ENCODE measurements at regions of chr19 and their contacts with region 1.

Region 1: GRCh38 chr19:15466851-15467733 is 2.7 kb upstream of the RASAL3 start:
- DNase-seq: peak; percentile 68
- H3K4me3 Mint-ChIP-seq: peak overlapping the region; percentile 65
- H3K27ac Mint-ChIP-seq: peak overlapping the region; percentile 97
- H3K4me1 Mint-ChIP-seq: peaks cover 68% of the 10 kb centered on the region
- H3K27me3 Mint-ChIP-seq: peaks cover 3% of the 10 kb centered on the region

Region 2: GRCh38 chr19:15125232-15126067 is 341.6 kb before region 1 on chr19:
- intact Hi-C with region 1: loop called (anchors 5 kb)
- DNase-seq: peak; percentile 97
- H3K4me3 Mint-ChIP-seq: peak overlapping the region; percentile 91
- H3K27ac Mint-ChIP-seq: peak overlapping the region; percentile 98
- H3K4me1 Mint-ChIP-seq: peaks cover 37% of the 10 kb centered on the region
- H3K27me3 Mint-ChIP-seq: no peaks in the 10 kb centered on the region

Region 3: GRCh38 chr19:15379083-15379995 is 87.8 kb before region 1 on chr19 and contains the start of gene AKAP8:
- intact Hi-C with region 1: loop called (anchors 1 kb)
- DNase-seq: peak; percentile 98
- H3K4me3 Mint-ChIP-seq: peak within 1 kb of the TSS; percentile 98
- H3K27ac Mint-ChIP-seq: peak within 1 kb of the TSS; percentile 100
- H3K4me1 Mint-ChIP-seq: peaks cover 35% of the 10 kb centered on the region
- H3K27me3 Mint-ChIP-seq: no peaks in the 10 kb centered on the region
- total RNA-seq, gene AKAP8: 52.7 and 57.5 TPM in 2 replicates

Region 4: GRCh38 chr19:15432629-15433518 is 34.2 kb before region 1 on chr19:
- intact Hi-C with region 1: loop called (anchors 1 kb)
- DNase-seq: peak; percentile 94
- H3K4me3 Mint-ChIP-seq: peak overlapping the region; percentile 91
- H3K27ac Mint-ChIP-seq: peak overlapping the region; percentile 88
- H3K4me1 Mint-ChIP-seq: peaks cover 31% of the 10 kb centered on the region
- H3K27me3 Mint-ChIP-seq: no peaks in the 10 kb centered on the region

Region 5: DNA sequence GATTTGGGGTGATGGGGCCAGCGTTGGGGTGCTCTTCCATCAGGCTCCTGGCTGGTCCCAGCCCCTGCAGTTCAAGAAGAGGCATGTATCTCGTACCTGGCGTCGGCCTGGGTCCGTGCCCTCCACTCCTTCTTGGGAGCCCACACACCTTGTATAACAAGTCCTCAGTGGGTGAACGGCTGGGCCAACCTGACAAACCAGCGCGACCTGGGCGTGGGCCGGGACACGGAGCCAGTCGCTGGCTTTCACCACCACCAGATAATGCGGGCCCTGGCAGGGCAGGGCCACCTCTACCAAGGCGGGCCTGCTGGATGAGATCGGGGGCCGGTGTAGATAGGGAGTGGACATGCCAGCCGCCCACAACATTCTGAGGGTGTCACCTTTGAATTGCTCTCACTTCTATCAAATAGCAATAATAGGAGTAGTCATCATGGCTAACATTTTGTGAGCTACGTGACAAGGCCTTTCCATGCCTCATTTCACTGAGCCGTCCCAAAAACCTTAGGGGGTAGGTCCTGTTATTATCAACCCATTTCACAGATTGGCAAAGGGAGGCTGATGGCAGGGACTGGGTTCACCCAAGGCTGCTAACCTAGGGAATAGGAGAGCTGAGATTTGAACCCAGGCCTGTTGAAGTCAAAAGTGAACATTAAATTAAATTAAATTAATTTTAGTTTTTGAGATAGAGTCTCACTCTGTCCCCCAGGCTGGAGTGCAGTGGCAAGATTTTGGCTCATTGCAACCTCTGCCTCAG is 44.8 kb after region 1 on chr19:
- intact Hi-C with region 1: loop called (anchors 2 kb)
- DNase-seq: no peak
- H3K4me3 Mint-ChIP-seq: no peak overlapping the region
- H3K27ac Mint-ChIP-seq: no peak overlapping the region
- H3K4me1 Mint-ChIP-seq: peaks cover 24% of the 10 kb centered on the region
- H3K27me3 Mint-ChIP-seq: peaks cover 28% of the 10 kb centered on the region

Region 6: DNA sequence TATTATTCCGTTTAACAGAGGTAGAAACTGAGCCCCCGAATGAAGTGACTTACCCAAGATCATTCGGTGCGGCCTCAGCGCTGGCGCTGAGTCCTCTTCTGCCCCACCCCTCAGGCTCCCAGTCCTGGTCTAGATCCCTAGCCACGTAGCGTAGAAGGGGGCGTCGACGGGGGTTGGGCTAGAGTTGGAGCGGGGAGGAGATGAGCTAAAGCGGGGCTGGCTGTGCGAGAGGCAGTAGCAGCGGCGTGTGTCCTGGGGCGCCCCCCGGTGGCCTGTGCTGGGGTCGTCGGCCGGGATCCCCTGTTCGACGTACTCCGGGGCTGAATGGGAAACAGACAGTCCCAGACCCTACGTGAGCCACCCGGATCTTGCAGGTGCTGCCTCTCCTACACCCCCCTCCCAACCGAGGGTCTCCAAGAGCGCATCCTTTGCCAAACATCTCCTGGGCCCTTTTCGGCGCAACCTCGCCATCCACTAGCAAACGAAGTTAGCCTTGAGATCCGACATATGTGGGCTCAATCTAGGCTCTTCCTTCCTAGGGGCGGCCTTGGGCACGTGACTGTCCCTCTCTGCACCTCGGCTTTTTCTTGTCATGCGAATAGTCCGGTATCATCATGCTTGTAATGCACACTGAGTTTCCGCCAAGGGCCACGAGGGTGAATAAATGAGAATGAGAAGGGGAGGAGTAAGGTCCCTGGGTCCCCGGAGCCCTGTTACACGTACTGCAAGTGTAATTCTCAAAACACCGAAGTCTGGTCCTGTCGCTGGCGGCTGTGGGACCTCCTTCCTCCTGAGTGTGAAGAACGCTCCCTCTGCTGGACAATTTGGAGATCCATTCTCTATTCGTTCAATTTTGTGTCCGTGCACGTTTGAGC is 88.9 kb after region 1 on chr19:
- intact Hi-C with region 1: loop called (anchors 1 kb)
- DNase-seq: peak; percentile 92
- H3K4me3 Mint-ChIP-seq: peak overlapping the region; percentile 82
- H3K27ac Mint-ChIP-seq: peak overlapping the region; percentile 83
- H3K4me1 Mint-ChIP-seq: peaks cover 25% of the 10 kb centered on the region
- H3K27me3 Mint-ChIP-seq: peaks cover 9% of the 10 kb centered on the region

Region 7: DNA sequence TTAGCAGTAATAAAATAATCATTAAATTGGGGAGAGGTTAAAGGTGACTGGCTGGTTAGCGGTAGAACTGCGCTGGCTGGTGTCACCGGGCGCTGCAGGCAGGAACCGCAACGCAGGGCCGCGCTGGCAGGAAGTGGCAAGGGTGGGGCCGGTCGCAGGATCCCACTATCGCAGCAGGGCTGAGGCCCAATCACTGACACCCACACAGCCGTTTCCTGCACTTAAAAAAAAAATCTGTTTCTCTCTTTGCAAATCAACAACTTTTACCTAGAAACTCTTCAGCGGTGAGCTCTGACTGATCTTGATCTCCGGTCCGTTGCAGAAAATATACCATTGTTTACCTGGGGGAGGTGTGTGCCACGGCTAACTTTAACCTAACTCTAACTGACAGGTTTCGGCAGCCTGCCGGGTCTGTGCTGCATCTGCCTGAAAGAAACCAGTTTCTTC is 904.5 kb after region 1 on chr19:
- intact Hi-C with region 1: loop called (anchors 10 kb)
- DNase-seq: peak; percentile 89
- H3K4me3 Mint-ChIP-seq: peak overlapping the region; percentile 64
- H3K27ac Mint-ChIP-seq: peak overlapping the region; percentile 83
- H3K4me1 Mint-ChIP-seq: peaks cover 33% of the 10 kb centered on the region
- H3K27me3 Mint-ChIP-seq: peaks cover 7% of the 10 kb centered on the region

Region 8: GRCh38 chr19:17292286-17293097 is 1825.4 kb after region 1 on chr19:
- intact Hi-C with region 1: no loop called
- DNase-seq: peak; percentile 69
- H3K4me3 Mint-ChIP-seq: peak overlapping the region; percentile 85
- H3K27ac Mint-ChIP-seq: peak overlapping the region; percentile 87
- H3K4me1 Mint-ChIP-seq: no peaks in the 10 kb centered on the region
- H3K27me3 Mint-ChIP-seq: no peaks in the 10 kb centered on the region